HEK293T (cell line): ENCODE measurements at regions of chr10 and their contacts with region 1.

Region 1: GRCh38 chr10:114714281-114714741 is 56.2 kb upstream of the ABLIM1 start:
- DNase-seq: peak; percentile 49

Region 2: GRCh38 chr10:114703377-114704107 is 10.8 kb before region 1 on chr10:
- CTCF ChIA-PET with region 1: interaction called, 13 read pairs
- POLR2A ChIA-PET with region 1: no interaction called
- DNase-seq: peak; percentile 66